Activated T-helper 1 cell treated with anti-CD3 and anti-CD28 coated beads, Interleukin-12 subunit alpha, Interleukin-12 subunit beta, Interleukin-2, Interleukin-4 antibody, amounts not matched to agents 30 ng/mL and 10 ng/mL and 1 ng/mL, durations not matched to agents 14 hours and 24 hours and 36 hours (primary cell): ENCODE measurements at regions of chr10 and their contacts with region 1.

Region 1: DNA sequence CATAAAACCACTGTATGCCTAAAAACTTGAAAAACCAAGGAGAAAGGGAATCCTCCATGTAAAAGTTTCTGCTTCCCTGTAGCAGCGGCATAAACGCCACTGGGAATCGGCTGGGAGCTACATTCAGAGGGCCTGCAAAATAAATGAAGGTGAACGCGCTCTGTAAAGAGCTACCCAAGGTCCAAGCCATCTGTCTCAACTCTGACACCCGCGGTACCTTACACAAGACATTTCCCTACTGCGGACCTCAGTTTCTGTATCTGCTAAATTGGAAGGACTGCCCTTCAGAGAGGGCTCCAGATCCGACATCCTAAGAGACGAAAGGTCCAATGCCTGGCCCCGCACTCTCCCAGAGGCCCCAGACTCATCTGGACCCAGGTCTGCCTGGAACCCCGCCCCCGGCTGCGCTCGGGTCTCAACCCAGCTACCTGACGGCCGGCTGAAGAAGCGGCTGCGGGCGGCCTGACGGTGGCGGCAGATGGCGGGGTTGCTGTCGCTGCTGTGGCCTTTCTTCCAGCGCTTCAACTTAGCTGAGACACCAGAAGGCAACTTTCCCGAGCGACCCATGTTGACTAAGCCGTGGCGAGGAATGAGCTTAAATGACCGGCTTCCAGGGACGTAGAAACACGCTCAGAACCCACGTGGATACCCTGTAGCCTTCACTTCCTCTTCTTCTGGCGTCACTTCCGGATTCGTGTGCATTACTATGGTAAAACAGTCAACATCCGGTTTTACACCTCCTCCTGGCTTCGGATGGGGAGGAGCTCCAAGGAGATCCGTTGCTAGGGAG is at the start of gene RRP12:
- DNase-seq: peak; percentile 89
- H3K4me3 Mint-ChIP-seq: peak within 1 kb of the TSS; percentile 97
- H3K27ac Mint-ChIP-seq: peak within 1 kb of the TSS; percentile 87
- H3K4me1 Mint-ChIP-seq: peaks cover 17% of the 10 kb centered on the region
- H3K27me3 Mint-ChIP-seq: no peaks in the 10 kb centered on the region
- total RNA-seq, gene RRP12: 99.9 and 104 TPM in 2 replicates

Region 2: DNA sequence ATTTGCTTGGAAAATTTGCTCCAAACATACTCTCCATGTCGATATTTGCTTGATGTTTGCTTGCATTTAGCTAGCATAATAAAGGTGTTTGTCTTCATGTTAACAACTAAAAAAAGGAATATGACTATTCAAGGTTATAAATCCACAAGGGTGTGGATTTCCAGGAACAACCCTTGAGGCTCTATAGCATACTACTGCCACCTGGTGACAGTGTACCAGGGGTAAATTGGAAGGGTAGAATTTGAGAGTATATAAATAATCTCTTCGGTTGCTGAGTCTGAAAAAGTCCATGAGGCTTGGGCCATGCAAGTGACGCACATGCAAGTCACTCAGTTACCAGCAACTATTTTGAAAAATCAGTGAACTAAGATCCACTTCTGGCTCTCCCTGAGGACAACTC is 283.5 kb before region 1 on chr10:
- intact Hi-C with region 1: no loop called
- DNase-seq: no peak
- H3K4me3 Mint-ChIP-seq: no peak overlapping the region
- H3K27ac Mint-ChIP-seq: no peak overlapping the region
- H3K4me1 Mint-ChIP-seq: no peaks in the 10 kb centered on the region
- H3K27me3 Mint-ChIP-seq: peaks cover 8% of the 10 kb centered on the region

Region 3: DNA sequence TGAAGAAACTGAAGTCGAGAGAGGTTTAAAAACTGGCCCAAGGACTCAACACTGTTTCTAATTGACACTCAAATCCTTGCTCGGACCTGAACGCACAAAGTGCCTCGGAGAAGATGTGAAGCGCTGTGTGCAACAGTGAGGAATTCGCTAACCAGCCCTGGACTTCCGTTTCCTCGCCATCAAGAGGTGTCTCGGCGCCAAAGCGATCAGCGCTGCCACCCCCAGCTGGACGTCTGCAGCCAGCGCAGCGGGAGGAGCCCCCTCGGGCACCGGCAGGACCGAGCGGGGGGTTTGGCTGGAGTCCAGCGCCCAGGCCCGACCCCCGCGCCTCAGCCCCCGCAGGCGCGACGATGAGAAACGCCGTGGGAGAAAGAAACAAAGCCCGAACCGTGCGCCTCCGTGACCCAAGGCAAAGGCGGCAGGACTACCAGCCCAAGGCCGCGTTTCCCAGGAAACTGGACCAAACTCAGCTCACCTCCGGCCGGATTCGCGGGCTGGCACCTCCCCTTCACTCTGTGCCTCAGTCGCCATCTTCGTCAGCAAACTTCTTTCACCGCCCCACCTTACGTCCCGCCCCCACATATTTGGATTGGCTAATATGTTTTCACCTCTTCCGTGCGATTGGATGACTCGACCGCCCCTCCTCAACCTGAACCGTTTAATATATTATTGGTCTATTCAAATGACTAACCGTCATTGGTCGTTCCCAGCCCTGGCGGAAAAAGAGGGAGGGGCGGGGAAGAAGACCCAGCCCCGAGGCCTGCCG is 108.6 kb before region 1 on chr10 and contains the start of gene ARHGAP19:
- intact Hi-C with region 1: loop called (anchors 1 kb)
- DNase-seq: peak; percentile 92
- H3K4me3 Mint-ChIP-seq: peak within 1 kb of the TSS; percentile 91
- H3K27ac Mint-ChIP-seq: peak within 1 kb of the TSS; percentile 92
- H3K4me1 Mint-ChIP-seq: peaks cover 22% of the 10 kb centered on the region
- H3K27me3 Mint-ChIP-seq: peaks cover 3% of the 10 kb centered on the region
- total RNA-seq, gene ARHGAP19: 27.1 and 27.8 TPM in 2 replicates

Region 4: GRCh38 chr10:97334370-97335175 is 66.3 kb before region 1 on chr10 and contains the start of gene FRAT2:
- intact Hi-C with region 1: loop called (anchors 1 kb)
- DNase-seq: peak; percentile 83
- H3K4me3 Mint-ChIP-seq: peak within 1 kb of the TSS; percentile 86
- H3K27ac Mint-ChIP-seq: peak within 1 kb of the TSS; percentile 75
- H3K4me1 Mint-ChIP-seq: peaks cover 34% of the 10 kb centered on the region
- H3K27me3 Mint-ChIP-seq: peaks cover 24% of the 10 kb centered on the region
- total RNA-seq, gene FRAT2: 10.8 and 11.2 TPM in 2 replicates

Region 5: DNA sequence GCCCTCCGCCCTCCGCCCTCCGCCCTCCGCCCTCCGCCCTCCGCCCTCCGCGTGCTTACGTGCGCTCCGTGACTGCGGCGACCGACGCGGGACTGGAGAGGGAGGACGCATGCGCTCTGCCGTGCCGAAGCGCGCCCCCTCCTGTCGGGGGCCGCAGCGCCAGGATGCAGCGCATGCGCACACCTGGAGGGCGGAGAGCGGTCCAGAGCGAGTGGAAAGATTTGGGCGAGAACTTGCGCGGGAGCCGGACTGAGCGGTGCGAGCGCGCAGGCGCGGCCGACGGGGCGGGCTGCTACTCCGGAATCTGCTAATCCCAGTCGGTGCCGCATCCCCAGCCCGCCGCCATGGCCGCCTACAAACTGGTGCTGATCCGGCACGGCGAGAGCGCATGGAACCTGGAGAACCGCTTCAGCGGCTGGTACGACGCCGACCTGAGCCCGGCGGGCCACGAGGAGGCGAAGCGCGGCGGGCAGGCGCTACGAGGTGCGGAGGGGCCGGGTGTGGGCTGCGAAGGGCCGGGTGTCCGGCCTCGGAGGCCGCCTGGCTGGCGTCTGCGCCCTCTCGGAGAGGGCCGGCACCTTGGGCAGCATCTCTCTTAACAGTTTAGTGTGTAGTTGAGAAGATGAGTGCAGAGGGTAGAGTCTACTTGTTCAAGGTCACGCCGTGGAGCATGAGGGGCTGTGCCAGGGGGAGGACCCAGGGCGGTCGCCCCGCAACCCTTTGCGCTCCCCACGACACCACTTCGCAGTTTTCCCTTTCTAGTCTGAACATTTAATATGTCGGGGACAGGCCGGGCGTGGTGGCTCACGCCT is 25.3 kb after region 1 on chr10 and contains the start of gene PGAM1:
- intact Hi-C with region 1: loop called (anchors 1 kb)
- DNase-seq: peak; percentile 98
- H3K4me3 Mint-ChIP-seq: peak within 1 kb of the TSS; percentile 94
- H3K27ac Mint-ChIP-seq: peak within 1 kb of the TSS; percentile 99
- H3K4me1 Mint-ChIP-seq: peaks cover 46% of the 10 kb centered on the region
- H3K27me3 Mint-ChIP-seq: peaks cover 2% of the 10 kb centered on the region
- total RNA-seq, gene PGAM1: 967 and 979 TPM in 2 replicates

Region 6: DNA sequence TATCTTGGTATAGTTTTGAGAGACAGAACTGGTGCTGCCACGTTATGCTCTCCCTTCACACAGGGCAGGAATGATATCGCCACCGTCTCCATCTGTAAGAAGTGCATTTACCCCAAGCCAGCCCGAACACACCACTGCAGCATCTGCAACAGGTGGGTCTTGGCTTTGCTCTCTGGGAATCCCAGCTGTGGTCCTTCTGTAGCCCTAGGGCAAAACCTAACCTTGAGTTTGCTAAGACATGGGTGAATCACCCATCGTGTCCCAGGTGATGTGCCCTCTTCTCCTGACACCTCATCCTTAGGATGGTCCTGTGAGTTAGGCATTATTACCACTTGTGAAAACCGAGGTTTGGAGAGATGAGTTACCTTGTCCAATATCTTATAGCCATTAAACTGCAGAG is 51.5 kb after region 1 on chr10:
- intact Hi-C with region 1: no loop called
- DNase-seq: no peak
- H3K4me3 Mint-ChIP-seq: no peak overlapping the region
- H3K27ac Mint-ChIP-seq: peak overlapping the region; percentile 58
- H3K4me1 Mint-ChIP-seq: peaks cover 39% of the 10 kb centered on the region
- H3K27me3 Mint-ChIP-seq: no peaks in the 10 kb centered on the region